ENCODE measurements at regions of chr16 and their contacts with region 1.

Region 1: GRCh38 chr16:66608241-66609138 is 4.0 kb downstream of the CMTM3 start:
- DNase-seq: no peak
- ATAC-seq: peak; percentile 53
- H3K4me3 ChIP-seq: no peak overlapping the region
- H3K27ac ChIP-seq: no peak overlapping the region
- H3K4me1 ChIP-seq: peaks cover 15% of the 10 kb centered on the region
- H3K27me3 ChIP-seq: no peaks in the 10 kb centered on the region
- CTCF ChIP-seq: peak; percentile 91 to 95 (median 92)
- EP300 ChIP-seq: no peak
- POLR2A ChIP-seq: no peak; the same call in 1 of the 2 replicates
- RAD21 ChIP-seq: peak; percentile 58

Region 2: DNA sequence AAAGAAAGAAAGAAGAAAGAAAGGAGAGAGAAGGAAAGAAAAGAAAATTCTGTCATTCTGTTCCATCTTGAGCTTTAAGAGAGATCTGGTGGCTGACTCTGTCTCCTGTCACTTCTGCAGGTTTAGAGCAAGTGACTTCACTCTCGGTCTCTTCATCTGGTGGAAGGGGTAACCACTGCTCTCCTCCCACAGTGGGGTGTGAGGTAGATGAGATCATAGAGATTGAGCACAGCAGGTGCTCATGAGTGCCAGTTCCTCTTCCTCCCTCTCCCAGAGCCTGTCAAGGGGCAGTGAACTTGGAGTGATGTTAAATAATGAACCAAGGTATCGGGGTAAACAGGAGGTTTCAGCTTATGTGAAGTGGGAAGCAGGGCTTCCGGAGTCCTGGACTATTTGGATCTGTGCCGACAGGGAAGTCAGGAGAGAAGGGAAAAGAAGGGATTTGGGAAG is 133.7 kb before region 1 on chr16:
- CTCF ChIA-PET with region 1: interaction called, 10 read pairs
- POLR2A ChIA-PET with region 1: no interaction called
- RAD21 ChIA-PET with region 1: no interaction called
- SMC1A ChIA-PET with region 1: interaction called, 3 read pairs
- in situ Hi-C with region 1: no loop called
- intact Hi-C with region 1: no loop called
- DNase-seq: peak; percentile 9
- ATAC-seq: peak; percentile 90
- H3K4me3 ChIP-seq: no peak overlapping the region
- H3K27ac ChIP-seq: no peak overlapping the region
- H3K4me1 ChIP-seq: no peaks in the 10 kb centered on the region
- H3K27me3 ChIP-seq: peaks cover 0 to 3% of the 10 kb centered on the region in 2 experiments; a peak in 1 of 4 replicates
- CTCF ChIP-seq: no peak
- EP300 ChIP-seq: no peak
- POLR2A ChIP-seq: no peak
- RAD21 ChIP-seq: no peak

Region 3: GRCh38 chr16:66552286-66553177 is 56.0 kb before region 1 on chr16 and contains the start of gene CKLF:
- CTCF ChIA-PET with region 1: interaction called, 13 read pairs
- POLR2A ChIA-PET with region 1: no interaction called
- RAD21 ChIA-PET with region 1: interaction called, 3 read pairs
- SMC1A ChIA-PET with region 1: interaction called, 5 read pairs
- in situ Hi-C with region 1: no loop called
- intact Hi-C with region 1: loop called (anchors 5 kb)
- DNase-seq: peak; percentile 66
- ATAC-seq: peak; percentile 78
- H3K4me3 ChIP-seq: peak within 1 kb of the TSS; percentile 62
- H3K27ac ChIP-seq: peak within 1 kb of the TSS; percentile 33
- H3K4me1 ChIP-seq: peaks cover 23% of the 10 kb centered on the region
- H3K27me3 ChIP-seq: no peaks in the 10 kb centered on the region
- CTCF ChIP-seq: no peak
- EP300 ChIP-seq: no peak
- POLR2A ChIP-seq: peak; percentile 95
- RAD21 ChIP-seq: no peak
- polyA plus RNA-seq, gene CKLF: 181 to 193 TPM

Region 4: GRCh38 chr16:66588981-66589713 is 19.3 kb before region 1 on chr16:
- CTCF ChIA-PET with region 1: interaction called, 24 read pairs
- POLR2A ChIA-PET with region 1: interaction called, 4 read pairs
- RAD21 ChIA-PET with region 1: interaction called, 8 read pairs
- SMC1A ChIA-PET with region 1: interaction called, 5 read pairs
- in situ Hi-C with region 1: no loop called
- intact Hi-C with region 1: no loop called
- DNase-seq: no peak
- ATAC-seq: peak; percentile 98
- H3K4me3 ChIP-seq: no peak overlapping the region
- H3K27ac ChIP-seq: no peak overlapping the region
- H3K4me1 ChIP-seq: no peaks in the 10 kb centered on the region; the same call in 1 of the 2 replicates
- H3K27me3 ChIP-seq: peaks cover 0 to 4% of the 10 kb centered on the region in 2 experiments; a peak in 1 of 4 replicates
- CTCF ChIP-seq: peak; percentile 89 to 96 (median 91)
- EP300 ChIP-seq: no peak
- POLR2A ChIP-seq: no peak
- RAD21 ChIP-seq: peak; percentile 92

Region 5: DNA sequence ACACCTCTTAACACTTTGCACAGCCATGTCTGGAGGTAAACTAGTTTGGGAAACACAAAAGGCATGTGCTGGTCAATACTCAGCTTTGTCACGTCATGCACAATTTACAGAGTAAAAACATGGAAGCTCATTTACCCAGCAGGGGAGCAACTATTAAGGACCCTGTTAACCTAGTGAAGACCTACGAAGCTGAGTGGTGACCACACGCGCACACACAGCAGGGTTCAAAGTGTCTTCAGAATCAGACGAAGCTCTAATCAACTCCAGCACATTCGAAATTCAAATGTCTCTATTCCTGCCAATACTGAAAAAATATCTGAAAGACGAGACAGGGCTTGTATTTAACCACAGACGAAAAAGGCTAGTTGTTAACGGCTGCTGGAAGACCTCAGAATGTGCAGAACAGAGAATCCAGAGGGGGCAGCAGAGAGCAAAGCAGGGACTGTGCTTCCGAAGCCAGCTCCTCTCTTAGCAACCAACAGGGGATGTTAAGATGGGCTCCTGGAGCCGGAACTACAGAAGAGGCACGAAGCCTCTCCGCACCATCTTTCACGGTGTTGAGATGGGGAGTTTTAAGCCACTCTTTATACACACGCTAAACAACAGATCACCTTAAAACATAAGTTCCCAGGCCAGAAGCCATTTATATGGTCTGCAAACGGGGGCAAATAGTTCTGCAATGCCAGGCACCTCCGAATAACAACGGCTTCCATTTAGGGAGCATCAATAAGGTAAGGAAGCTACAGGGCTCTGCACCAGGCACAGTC is 42.4 kb after region 1 on chr16:
- CTCF ChIA-PET with region 1: interaction called, 35 read pairs
- POLR2A ChIA-PET with region 1: no interaction called
- RAD21 ChIA-PET with region 1: no interaction called
- SMC1A ChIA-PET with region 1: no interaction called
- in situ Hi-C with region 1: no loop called
- intact Hi-C with region 1: no loop called
- DNase-seq: peak; percentile 28
- ATAC-seq: peak; percentile 99
- H3K4me3 ChIP-seq: no peak overlapping the region
- H3K27ac ChIP-seq: no peak overlapping the region
- H3K4me1 ChIP-seq: no peaks in the 10 kb centered on the region
- H3K27me3 ChIP-seq: no peaks in the 10 kb centered on the region; a peak in 1 of 4 replicates
- CTCF ChIP-seq: peak; percentile 89 to 92 (median 90)
- EP300 ChIP-seq: no peak
- POLR2A ChIP-seq: no peak
- RAD21 ChIP-seq: peak; percentile 43; the same call in 1 of the 2 replicates

Region 6: GRCh38 chr16:66858740-66859396 is 250.4 kb after region 1 on chr16:
- CTCF ChIA-PET with region 1: interaction called, 4 read pairs
- POLR2A ChIA-PET with region 1: no interaction called
- RAD21 ChIA-PET with region 1: no interaction called
- SMC1A ChIA-PET with region 1: no interaction called
- in situ Hi-C with region 1: loop called (anchors 5 kb)
- intact Hi-C with region 1: no loop called
- DNase-seq: no peak
- ATAC-seq: peak; percentile 80
- H3K4me3 ChIP-seq: no peak overlapping the region
- H3K27ac ChIP-seq: no peak overlapping the region; the same call in 1 of the 2 replicates
- H3K4me1 ChIP-seq: peaks cover 4% of the 10 kb centered on the region
- H3K27me3 ChIP-seq: no peaks in the 10 kb centered on the region
- CTCF ChIP-seq: no peak
- EP300 ChIP-seq: no peak
- POLR2A ChIP-seq: no peak
- RAD21 ChIP-seq: no peak

Region 7: GRCh38 chr16:66961065-66961744 is 352.7 kb after region 1 on chr16 and contains the start of gene CES3:
- CTCF ChIA-PET with region 1: no interaction called
- POLR2A ChIA-PET with region 1: no interaction called
- RAD21 ChIA-PET with region 1: no interaction called
- SMC1A ChIA-PET with region 1: no interaction called
- in situ Hi-C with region 1: no loop called
- intact Hi-C with region 1: no loop called
- DNase-seq: no peak
- ATAC-seq: peak; percentile 99
- H3K4me3 ChIP-seq: no peak within 1 kb of the TSS; the same call in 1 of the 2 replicates
- H3K27ac ChIP-seq: no peak within 1 kb of the TSS
- H3K4me1 ChIP-seq: peaks cover 11% of the 10 kb centered on the region
- H3K27me3 ChIP-seq: no peaks in the 10 kb centered on the region
- CTCF ChIP-seq: peak; percentile 79 to 91 (median 86)
- EP300 ChIP-seq: no peak
- POLR2A ChIP-seq: no peak
- RAD21 ChIP-seq: peak; percentile 17; the same call in 1 of the 2 replicates
- polyA plus RNA-seq, gene CES3: 0.09 to 0.18 TPM